Heart left ventricle (tissue), 16 donors: ENCODE measurements at regions of chr15 and their contacts with region 1.

Region 1: GRCh38 chr15:57395292-57395691 is 19.0 kb downstream of the CGNL1 start:
- DNase-seq: no peak
- ATAC-seq: peak in 3 of 4 donors; percentile 42 to 92 (median 64)
- H3K4me3 ChIP-seq: no peak overlapping the region
- H3K27ac ChIP-seq: peak overlapping the region in 1 of 12 donors; percentile 30
- H3K4me1 ChIP-seq: peaks cover 0 to 23% (median 4%) of the 10 kb centered on the region in 12 donors
- H3K27me3 ChIP-seq: no peaks in the 10 kb centered on the region
- CTCF ChIP-seq: no peak
- POLR2A ChIP-seq: no peak

Region 2: DNA sequence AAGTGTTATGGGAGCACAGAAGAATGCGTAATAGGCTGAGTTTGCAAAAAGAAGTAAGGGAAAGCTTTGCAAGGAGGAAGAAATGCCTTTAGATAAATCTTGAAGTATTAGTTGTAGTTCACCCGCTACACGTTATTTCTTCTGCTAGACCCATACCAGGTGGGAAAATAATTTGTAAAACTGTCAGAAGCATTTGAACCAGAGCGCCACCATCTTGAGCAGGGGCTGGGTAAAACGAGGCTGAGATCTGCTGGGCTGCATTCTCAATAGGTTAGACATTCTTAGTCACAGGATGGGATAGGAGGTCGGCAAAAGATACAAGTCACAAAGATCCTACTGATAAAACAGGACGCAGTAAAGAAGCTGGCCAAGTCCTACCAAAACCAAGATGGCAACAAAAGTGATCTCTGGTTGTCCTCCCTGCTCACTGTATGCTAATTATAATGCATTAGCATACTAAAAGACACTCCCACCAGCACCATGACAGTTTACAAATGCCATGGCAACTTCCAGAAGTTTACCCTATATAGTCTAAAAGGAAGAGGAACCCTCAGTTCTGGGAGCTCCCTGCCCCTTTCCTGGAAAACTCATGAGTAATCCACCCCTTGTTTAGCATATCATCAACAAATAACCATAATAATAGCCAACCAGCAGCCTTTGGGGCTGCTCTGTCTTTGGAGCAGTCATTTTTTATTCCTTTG is 612.0 kb before region 1 on chr15:
- intact Hi-C with region 1: no loop called
- DNase-seq: no peak
- ATAC-seq: no peak
- H3K4me3 ChIP-seq: no peak overlapping the region
- H3K27ac ChIP-seq: no peak overlapping the region
- H3K4me1 ChIP-seq: no peaks in the 10 kb centered on the region
- H3K27me3 ChIP-seq: no peaks in the 10 kb centered on the region
- CTCF ChIP-seq: no peak
- POLR2A ChIP-seq: no peak

Region 3: GRCh38 chr15:57440799-57441198 is 45.5 kb after region 1 on chr15:
- intact Hi-C with region 1: loop called in 1 of 10 experiments (anchors 10 kb)
- DNase-seq: no peak
- ATAC-seq: peak in 3 of 4 donors; percentile 59 to 65 (median 63)
- H3K4me3 ChIP-seq: no peak overlapping the region
- H3K27ac ChIP-seq: peak overlapping the region in 4 of 12 donors; percentile 2 to 45 (median 26)
- H3K4me1 ChIP-seq: peaks cover 0 to 33% (median 16%) of the 10 kb centered on the region in 12 donors
- H3K27me3 ChIP-seq: no peaks in the 10 kb centered on the region
- CTCF ChIP-seq: no peak
- POLR2A ChIP-seq: no peak